ENCODE measurements at regions of chr18 and their contacts with region 1.

Region 1: GRCh38 chr18:48445540-48445939 is 36.4 kb upstream of the ZBTB7C start:
- DNase-seq: peak; percentile 74
- ATAC-seq: peak; percentile 36 to 77

Region 2: DNA sequence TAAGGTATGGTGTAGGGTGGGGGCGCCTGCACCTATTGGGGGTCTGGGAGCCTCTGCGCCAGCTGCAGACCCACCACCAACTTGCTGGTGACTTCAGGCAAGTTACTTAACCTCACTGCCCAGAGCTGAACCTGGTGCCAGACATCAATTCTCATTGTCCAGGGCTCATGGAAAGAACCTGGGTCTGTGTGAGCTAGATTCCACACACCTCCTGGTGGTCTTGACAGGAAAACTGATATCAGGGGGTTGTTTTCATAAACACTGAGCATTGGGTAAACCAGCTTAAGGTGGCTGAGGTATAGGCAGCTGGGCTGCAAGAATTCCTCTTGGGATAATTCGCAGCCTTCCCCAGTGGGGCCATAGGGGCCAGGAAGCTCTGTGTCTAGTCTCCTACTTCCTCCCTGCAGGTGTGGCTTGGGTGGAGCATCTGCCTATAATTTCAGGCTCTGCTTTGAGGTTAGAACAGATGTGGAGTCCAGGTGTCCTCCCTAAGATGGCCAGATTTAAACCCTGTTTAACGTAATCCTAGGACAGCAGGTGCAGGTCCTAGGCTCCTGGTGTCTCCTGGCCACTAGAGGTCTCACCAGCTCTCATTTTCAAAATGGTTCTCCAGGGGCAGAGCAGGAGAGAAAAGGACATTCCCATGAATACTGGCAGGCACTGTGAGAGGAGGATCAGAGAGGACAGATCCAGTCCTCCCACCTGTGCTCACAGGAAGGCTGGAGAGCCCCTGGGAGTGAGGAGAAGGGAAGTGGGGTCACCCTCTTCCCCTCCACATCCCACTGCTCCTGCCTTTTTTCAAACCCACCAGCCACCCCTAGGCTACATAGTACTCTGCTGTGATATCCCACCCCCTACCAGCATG is 414.7 kb before region 1 on chr18:
- intact Hi-C with region 1: loop called (anchors 2 to 5 kb)
- DNase-seq: no peak
- ATAC-seq: peak; percentile 63 to 68

Region 3: GRCh38 chr18:48851599-48851960 is 406.0 kb after region 1 on chr18:
- intact Hi-C with region 1: no loop called
- DNase-seq: peak; percentile 79
- ATAC-seq: peak; percentile 52 to 79